Left lung (tissue), 14 donors: ENCODE measurements at regions of chr18 and their contacts with region 1.

Region 1: DNA sequence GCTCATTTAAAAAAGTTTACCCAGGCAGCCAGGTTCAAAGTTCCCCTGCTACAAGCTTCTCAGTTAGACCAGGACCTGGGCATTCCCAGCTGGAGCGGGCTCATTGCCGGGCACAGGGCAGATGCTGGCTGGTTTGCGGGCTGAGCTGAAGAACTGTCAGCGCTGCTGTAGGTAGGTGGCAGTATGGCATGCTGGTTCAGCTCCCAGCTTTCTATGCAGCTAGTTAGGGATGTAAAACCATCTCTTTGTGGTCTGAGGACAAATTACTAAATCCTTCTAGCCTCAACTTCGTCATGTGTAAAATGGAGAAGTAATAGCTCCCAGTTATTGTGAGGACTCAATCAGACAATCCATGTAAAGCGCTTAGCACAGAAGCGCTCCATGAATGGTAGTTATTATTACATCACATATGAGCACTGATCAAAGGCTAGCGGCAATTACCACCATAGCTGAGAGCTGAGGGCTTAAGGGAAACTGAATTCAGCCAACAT is 2.4 kb upstream of the LDLRAD4 start:
- DNase-seq: peak in 2 of 4 donors; percentile 78
- ATAC-seq: peak; percentile 84
- H3K4me3 ChIP-seq: no peak overlapping the region
- H3K27ac ChIP-seq: no peak overlapping the region
- H3K4me1 ChIP-seq: peaks cover 11 to 47% of the 10 kb centered on the region in 2 donors
- H3K27me3 ChIP-seq: peaks cover 0 to 76% of the 10 kb centered on the region in 2 donors
- CTCF ChIP-seq: peak; percentile 53 to 60

Region 2: DNA sequence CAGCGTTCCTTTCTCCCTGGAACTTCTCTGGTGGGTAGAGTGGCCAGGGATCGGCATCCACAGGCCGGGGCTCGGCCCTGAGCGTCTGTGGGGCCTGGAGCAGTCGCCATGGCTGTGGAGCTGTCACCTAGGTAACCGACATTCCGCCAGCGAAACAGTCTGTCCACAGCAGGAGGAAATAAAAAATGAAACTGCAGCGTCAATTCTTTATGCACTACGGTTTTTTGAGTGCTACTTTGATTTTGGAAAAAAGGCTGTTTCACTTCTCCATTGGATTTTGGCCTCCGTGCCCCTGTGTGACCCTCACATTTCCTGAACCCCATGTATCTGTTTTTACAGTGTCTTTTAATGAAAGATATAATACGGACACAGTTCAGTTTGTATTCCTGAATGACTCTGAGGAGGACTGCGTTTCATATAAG is 165.8 kb after region 1 on chr18:
- intact Hi-C with region 1: no loop called
- DNase-seq: peak; percentile 71 to 85 (median 80)
- ATAC-seq: peak; percentile 91
- H3K4me3 ChIP-seq: peak overlapping the region; percentile 9 to 16
- H3K27ac ChIP-seq: peak overlapping the region; percentile 82 to 83
- H3K4me1 ChIP-seq: peaks cover 15 to 37% of the 10 kb centered on the region in 2 donors
- H3K27me3 ChIP-seq: no peaks in the 10 kb centered on the region
- CTCF ChIP-seq: no peak

Region 3: DNA sequence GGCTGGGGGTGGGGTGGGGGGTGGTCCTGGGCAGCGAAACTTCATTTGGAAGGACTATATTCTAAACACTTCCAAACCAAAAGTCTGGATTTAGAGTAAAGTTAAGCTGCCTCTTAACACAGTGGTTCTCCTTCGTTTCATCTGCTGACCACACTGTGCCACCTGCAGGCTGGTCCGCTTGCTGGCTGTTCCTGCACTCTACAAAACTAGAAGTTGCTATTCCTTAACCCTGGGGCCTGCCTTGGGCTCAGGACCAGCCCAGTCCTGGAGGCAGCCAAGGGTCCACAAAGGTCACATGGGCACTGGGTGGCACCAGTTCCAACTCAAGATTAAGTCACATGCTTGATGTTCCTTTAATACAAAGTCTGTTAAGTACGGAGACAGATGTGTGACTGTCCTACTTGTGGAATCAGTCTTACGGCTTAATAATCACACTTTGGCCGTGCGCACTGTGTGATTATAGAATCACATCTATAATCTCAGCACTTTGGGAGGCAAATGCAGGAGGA is 314.8 kb after region 1 on chr18:
- intact Hi-C with region 1: loop called in 1 of 2 experiments (anchors 5 kb)
- DNase-seq: peak in 2 of 4 donors; percentile 57 to 64
- ATAC-seq: peak; percentile 92
- H3K4me3 ChIP-seq: no peak overlapping the region
- H3K27ac ChIP-seq: no peak overlapping the region
- H3K4me1 ChIP-seq: peaks cover 0 to 8% of the 10 kb centered on the region in 2 donors
- H3K27me3 ChIP-seq: no peaks in the 10 kb centered on the region
- CTCF ChIP-seq: peak; percentile 41 to 48

Region 4: GRCh38 chr18:13629841-13630715 is 413.9 kb after region 1 on chr18:
- intact Hi-C with region 1: loop called in 1 of 2 experiments (anchors 10 kb)
- DNase-seq: peak in 2 of 4 donors; percentile 60 to 78
- ATAC-seq: peak; percentile 89
- H3K4me3 ChIP-seq: no peak overlapping the region
- H3K27ac ChIP-seq: no peak overlapping the region
- H3K4me1 ChIP-seq: peaks cover 0 to 8% of the 10 kb centered on the region in 2 donors
- H3K27me3 ChIP-seq: no peaks in the 10 kb centered on the region
- CTCF ChIP-seq: peak; percentile 63